Left cardiac atrium (tissue), 4 donors: ENCODE measurements at regions of chr11 and their contacts with region 1.

Region 1: DNA sequence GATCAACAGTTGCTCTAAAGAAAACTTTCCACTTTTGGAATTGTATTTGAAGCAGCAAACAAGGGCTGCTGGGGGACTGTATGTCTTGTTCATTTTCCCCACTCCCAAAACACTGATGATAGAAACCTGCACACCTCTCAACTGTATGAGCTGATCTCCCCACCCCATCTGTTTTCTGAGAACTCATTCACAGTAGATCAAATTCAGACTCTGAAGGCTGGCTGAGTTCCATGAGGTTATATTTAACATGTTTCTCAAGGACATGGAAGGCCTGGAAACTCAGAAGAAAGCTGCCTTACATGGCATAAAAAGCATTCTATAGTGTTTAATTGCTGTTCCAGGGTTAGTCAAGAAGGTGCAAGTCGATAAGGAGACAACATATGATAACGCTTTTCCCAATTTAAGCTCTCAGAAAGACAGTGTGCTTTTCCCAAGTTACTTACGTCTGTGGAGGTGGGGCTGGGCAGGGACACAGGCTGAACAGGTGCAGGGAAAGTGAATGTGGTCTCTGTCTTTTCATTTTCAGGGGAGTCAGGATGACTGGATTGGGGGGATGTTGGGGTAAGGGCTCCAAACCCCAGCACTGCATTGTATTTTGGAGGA is 23.0 kb downstream of the LARGE2 start:
- DNase-seq: no peak
- ATAC-seq: no peak

Region 2: DNA sequence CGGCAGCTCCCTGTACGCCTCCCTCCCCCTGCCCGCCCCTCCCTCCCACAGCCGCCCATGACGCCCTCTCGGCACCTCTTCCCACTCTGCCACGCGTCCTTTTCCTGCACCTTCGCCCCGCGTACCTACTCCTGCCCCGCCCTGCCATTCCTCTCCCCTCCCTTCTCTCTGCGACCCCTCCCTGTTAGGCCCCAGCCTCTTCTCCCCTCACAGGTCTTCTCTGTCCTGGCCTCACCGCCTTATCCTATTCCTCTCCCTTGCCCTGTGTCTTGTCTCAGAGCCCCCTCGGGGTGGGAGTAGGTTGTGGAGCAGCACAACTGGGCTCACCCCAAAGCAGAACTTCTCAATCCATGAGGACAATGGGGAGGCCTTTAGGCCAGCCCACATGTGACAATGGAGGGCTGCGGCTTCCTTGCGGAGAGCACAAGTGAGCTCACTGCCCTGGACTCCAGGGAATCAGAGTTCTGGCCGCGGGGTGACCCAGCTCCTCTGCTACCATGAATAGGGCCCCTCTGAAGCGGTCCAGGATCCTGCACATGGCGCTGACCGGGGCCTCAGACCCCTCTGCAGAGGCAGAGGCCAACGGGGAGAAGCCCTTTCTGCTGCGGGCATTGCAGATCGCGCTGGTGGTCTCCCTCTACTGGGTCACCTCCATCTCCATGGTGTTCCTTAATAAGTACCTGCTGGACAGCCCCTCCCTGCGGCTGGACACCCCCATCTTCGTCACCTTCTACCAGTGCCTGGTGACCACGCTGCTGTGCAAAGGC is 140.0 kb before region 1 on chr11:
- intact Hi-C with region 1: no loop called
- DNase-seq: peak; percentile 66
- ATAC-seq: peak; percentile 35 to 48

Region 3: GRCh38 chr11:45984192-45984591 is 38.7 kb after region 1 on chr11:
- intact Hi-C with region 1: loop called in 1 of 2 experiments (anchors 2 kb)
- DNase-seq: no peak
- ATAC-seq: no peak

Region 4: DNA sequence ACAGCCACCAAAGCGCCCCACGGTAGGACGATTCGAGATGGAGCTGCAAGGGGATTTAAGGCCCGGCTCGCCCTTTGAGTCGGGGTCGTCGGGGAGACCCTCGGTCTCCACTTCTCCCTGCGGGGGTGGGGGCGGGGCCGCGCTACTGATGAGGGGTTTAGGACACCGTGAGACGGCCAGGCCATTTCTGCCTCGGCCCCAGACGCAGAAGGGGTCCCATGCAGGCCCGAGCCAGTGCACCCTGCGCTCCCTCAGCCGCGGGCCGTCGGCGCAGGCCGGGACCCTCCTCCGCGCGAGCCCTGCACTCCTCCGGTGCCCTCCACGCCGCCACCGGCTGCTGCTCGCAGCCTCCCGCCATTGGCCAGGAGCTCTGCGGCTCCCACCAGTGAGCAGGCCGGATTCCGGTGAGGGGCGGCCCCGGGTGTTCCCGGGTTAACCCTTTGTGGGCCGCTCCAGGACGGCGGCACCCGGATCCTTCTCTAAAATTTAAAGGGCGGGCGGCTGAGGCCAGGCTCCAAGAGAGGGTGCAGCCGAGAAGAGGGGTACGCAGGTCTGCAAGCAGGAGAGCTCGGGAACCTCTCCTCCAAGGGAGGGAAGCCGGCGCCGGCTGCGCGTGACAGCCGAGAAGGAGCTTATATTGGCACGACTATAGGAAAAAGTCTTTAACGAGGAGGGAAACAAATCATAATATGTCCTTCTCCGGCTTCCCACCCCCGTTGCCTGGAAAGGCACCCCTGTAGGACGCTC is 350.0 kb after region 1 on chr11:
- intact Hi-C with region 1: no loop called
- DNase-seq: peak; percentile 85
- ATAC-seq: peak; percentile 91 to 94